ENCODE measurements at regions of chr5 and their contacts with region 1.

Region 1: GRCh38 chr5:170603578-170604565 is 100.1 kb downstream of the KCNIP1 start:
- DNase-seq: peak; percentile 47 to 68 (median 59)
- H3K4me3 ChIP-seq: no peak overlapping the region
- H3K27ac ChIP-seq: no peak overlapping the region
- H3K4me1 ChIP-seq: no peaks in the 10 kb centered on the region
- H3K27me3 ChIP-seq: no peaks in the 10 kb centered on the region
- CTCF ChIP-seq: peak in 2 of 3 donors; percentile 8 to 40
- EP300 ChIP-seq: no peak
- POLR2A ChIP-seq: no peak

Region 2: GRCh38 chr5:170551076-170551475 is 52.8 kb before region 1 on chr5:
- intact Hi-C with region 1: loop called in 1 of 4 experiments (anchors 2 kb)
- DNase-seq: no peak
- H3K4me3 ChIP-seq: no peak overlapping the region
- H3K27ac ChIP-seq: no peak overlapping the region
- H3K4me1 ChIP-seq: peaks cover 2% of the 10 kb centered on the region
- H3K27me3 ChIP-seq: no peaks in the 10 kb centered on the region
- CTCF ChIP-seq: no peak
- EP300 ChIP-seq: no peak
- POLR2A ChIP-seq: no peak

Region 3: GRCh38 chr5:170642776-170643436 is 39.0 kb after region 1 on chr5:
- intact Hi-C with region 1: no loop called
- DNase-seq: no peak
- H3K4me3 ChIP-seq: no peak overlapping the region
- H3K27ac ChIP-seq: no peak overlapping the region
- H3K4me1 ChIP-seq: no peaks in the 10 kb centered on the region
- H3K27me3 ChIP-seq: no peaks in the 10 kb centered on the region
- CTCF ChIP-seq: no peak
- EP300 ChIP-seq: no peak
- POLR2A ChIP-seq: no peak